ENCODE measurements at regions of chr3 and their contacts with region 1.

Region 1: DNA sequence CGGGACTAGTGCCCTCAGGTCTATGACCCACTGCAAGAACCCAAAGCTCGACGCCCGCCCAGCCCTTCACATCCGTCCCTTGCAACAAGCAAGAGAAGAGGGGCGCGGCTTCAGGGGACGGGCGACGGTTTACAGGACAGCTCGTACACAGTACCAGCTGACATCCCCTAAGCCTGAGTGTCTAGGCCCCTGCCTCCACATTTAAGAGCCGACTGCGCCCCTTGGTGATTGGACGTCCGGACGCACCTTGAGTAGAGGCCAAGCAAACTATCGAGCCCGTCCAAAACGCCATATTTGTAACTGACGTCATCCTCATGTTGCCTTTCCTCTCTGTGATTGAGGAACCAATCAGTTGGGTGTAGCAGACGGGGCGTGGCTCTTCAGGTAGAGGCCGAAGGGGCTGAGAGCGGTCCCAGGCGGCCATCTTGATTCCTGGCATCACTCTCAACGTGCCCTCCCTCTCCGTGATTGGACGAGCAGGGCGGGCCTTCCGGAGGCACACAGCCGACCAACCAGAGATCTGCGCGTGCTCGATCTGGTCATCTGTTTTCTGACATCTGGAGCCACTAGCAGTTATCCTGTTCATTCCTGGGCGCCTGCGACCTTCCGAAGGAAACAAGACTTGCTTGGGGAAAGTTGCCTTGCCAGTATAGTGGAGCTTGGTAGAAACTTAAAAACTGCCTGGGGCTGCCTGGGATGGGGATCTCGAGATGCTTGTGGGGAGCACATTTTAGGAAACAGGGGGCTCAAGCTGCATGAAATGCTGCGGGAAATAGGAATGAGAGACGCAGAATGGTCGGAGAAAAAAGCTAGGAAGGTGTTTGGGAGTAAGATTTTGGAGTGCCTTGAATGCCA is 4.0 kb upstream of the RPL14 start:
- DNase-seq: peak; percentile 98 to 99 (median 98)
- ATAC-seq: peak; percentile 96 to 98 (median 97)
- H3K4me3 ChIP-seq: peak overlapping the region; percentile 36 to 82 (median 72)
- H3K27ac ChIP-seq: peak overlapping the region; percentile 89 to 98 (median 93)
- H3K4me1 ChIP-seq: peaks cover 6 to 39% (median 21%) of the 10 kb centered on the region in 12 donors
- H3K27me3 ChIP-seq: no peaks in the 10 kb centered on the region
- CTCF ChIP-seq: peak in 1 of 12 donors; percentile 5
- POLR2A ChIP-seq: peak in 1 of 2 donors; percentile 73

Region 2: GRCh38 chr3:40207796-40208195 is 245.3 kb before region 1 on chr3:
- intact Hi-C with region 1: loop called in 1 of 10 experiments (anchors 10 kb)
- DNase-seq: no peak
- ATAC-seq: no peak
- H3K4me3 ChIP-seq: no peak overlapping the region
- H3K27ac ChIP-seq: no peak overlapping the region
- H3K4me1 ChIP-seq: no peaks in the 10 kb centered on the region
- H3K27me3 ChIP-seq: no peaks in the 10 kb centered on the region
- CTCF ChIP-seq: no peak
- POLR2A ChIP-seq: no peak

Region 3: DNA sequence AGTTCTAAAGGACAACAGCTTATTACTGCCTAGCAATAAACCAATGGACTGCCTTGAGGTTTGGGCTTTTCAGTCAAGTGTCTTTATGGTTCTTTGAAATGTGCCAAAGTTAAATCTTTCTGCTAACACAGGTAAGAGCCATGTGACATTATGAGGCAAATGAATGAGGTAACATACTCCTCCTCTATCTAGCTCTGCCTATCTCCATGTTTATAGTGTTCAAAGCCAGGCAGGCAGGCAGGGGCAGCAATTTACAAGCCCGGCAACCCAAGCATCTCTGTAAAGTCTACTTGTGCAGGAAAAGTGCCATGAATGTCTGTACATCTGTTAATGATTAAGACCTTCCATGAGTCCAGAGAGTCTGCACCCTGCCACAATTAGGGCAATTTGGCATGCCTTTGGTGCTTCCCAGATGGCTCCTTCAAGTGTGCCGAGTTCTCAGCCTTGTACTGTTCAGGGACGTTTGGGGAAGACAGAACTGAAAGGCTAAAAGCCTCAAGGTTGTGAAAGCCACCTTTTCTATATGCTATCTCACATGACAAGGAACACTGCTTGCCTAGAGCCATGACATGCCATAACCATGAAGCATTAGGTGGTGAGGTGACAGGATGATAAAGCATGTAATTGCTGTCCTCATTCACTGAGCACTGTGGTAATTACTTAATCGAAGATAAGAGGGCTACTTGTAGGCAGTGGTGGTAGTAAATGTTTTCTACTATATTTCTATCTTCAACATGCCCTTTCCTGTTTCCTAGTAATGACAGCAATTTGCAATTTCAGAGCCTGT is 185.0 kb before region 1 on chr3:
- intact Hi-C with region 1: no loop called
- DNase-seq: no peak
- ATAC-seq: peak in 3 of 4 donors; percentile 58 to 75 (median 72)
- H3K4me3 ChIP-seq: no peak overlapping the region
- H3K27ac ChIP-seq: no peak overlapping the region
- H3K4me1 ChIP-seq: peaks cover 0 to 15% (median 1%) of the 10 kb centered on the region in 12 donors
- H3K27me3 ChIP-seq: no peaks in the 10 kb centered on the region
- CTCF ChIP-seq: no peak
- POLR2A ChIP-seq: no peak

Region 4: DNA sequence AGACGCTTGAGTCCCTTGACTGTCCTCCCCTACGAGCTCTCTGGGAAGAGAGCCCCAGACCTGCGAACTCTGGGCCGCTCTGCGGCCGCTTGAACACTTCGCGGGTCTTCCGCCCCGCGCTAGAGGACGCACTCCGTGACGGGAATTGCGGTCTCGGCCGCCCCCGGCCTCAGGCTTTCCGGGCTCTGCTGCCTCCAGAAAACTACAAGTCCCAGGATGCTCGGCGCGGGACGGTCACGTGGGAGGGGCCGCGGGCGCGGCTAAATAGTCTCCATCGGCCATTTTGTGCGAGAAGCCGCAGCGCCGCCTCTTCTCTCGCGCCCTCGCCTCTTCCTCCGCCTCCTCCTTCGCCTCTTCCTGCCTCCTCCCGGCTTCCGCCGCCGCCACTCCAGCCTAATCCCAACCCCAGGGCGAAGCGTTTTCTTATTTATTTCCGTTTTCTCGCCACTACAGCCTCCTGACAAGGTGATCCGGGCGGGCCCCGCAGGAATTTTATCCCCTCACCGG is 143.6 kb before region 1 on chr3 and contains the start of gene EIF1B:
- intact Hi-C with region 1: loop called in 3 of 10 experiments (anchors 2 to 5 kb)
- DNase-seq: peak; percentile 98 to 99 (median 99)
- ATAC-seq: peak; percentile 91 to 96 (median 94)
- H3K4me3 ChIP-seq: peak within 1 kb of the TSS; percentile 71 to 96 (median 88)
- H3K27ac ChIP-seq: peak within 1 kb of the TSS; percentile 92 to 99 (median 97)
- H3K4me1 ChIP-seq: peaks cover 0 to 50% (median 32%) of the 10 kb centered on the region in 12 donors
- H3K27me3 ChIP-seq: no peaks in the 10 kb centered on the region
- CTCF ChIP-seq: peak; percentile 85 to 99 (median 94)
- POLR2A ChIP-seq: peak; percentile 48 to 99
- total RNA-seq, gene EIF1B: 64.0 to 357 (median 289) TPM

Region 5: DNA sequence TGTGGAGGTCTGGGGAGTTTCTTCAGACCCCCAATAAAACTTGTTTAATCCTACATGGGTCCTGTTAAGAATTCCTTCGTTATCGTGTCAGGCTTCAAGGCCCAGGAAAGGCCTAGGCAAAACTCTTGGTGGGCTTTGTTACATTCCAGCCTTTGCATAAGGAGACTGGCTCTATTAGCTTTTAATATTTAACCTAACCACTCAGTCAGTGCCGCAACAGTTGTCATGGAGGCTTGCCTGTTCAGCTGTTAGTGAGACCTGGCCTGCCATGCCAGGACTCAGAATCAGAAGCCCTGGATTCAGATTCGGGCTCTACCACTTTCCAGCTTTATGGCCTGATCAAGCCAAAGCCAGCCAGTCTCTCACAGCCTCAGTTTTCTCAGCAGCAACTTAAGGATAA is 124.0 kb before region 1 on chr3:
- intact Hi-C with region 1: loop called in 7 of 10 experiments (anchors 5 to 10 kb)
- DNase-seq: no peak
- ATAC-seq: no peak
- H3K4me3 ChIP-seq: no peak overlapping the region
- H3K27ac ChIP-seq: no peak overlapping the region
- H3K4me1 ChIP-seq: peaks cover 0 to 10% (median 4%) of the 10 kb centered on the region in 12 donors
- H3K27me3 ChIP-seq: no peaks in the 10 kb centered on the region
- CTCF ChIP-seq: no peak
- POLR2A ChIP-seq: no peak

Region 6: GRCh38 chr3:40337136-40338108 is 115.7 kb before region 1 on chr3:
- intact Hi-C with region 1: loop called in 2 of 10 experiments (anchors 5 to 10 kb)
- DNase-seq: no peak
- ATAC-seq: no peak
- H3K4me3 ChIP-seq: no peak overlapping the region
- H3K27ac ChIP-seq: no peak overlapping the region
- H3K4me1 ChIP-seq: peaks cover 0 to 10% (median 0%) of the 10 kb centered on the region in 12 donors
- H3K27me3 ChIP-seq: no peaks in the 10 kb centered on the region
- CTCF ChIP-seq: no peak
- POLR2A ChIP-seq: no peak

Region 7: GRCh38 chr3:40366203-40367162 is 86.6 kb before region 1 on chr3:
- intact Hi-C with region 1: no loop called
- DNase-seq: no peak
- ATAC-seq: peak in 1 of 4 donors; percentile 31
- H3K4me3 ChIP-seq: no peak overlapping the region
- H3K27ac ChIP-seq: no peak overlapping the region
- H3K4me1 ChIP-seq: peaks cover 0 to 8% (median 0%) of the 10 kb centered on the region in 12 donors
- H3K27me3 ChIP-seq: no peaks in the 10 kb centered on the region
- CTCF ChIP-seq: no peak
- POLR2A ChIP-seq: no peak

Region 8: GRCh38 chr3:40524568-40525285 is 71.6 kb after region 1 on chr3 and contains the start of gene ZNF621:
- intact Hi-C with region 1: loop called (anchors 2 to 10 kb)
- DNase-seq: peak; percentile 93 to 96 (median 94)
- ATAC-seq: peak; percentile 96 to 100 (median 100)
- H3K4me3 ChIP-seq: peak within 1 kb of the TSS; percentile 54 to 95 (median 84)
- H3K27ac ChIP-seq: peak within 1 kb of the TSS; percentile 70 to 94 (median 86)
- H3K4me1 ChIP-seq: peaks cover 0 to 19% (median 13%) of the 10 kb centered on the region in 12 donors
- H3K27me3 ChIP-seq: no peaks in the 10 kb centered on the region
- CTCF ChIP-seq: peak in 1 of 12 donors; percentile 15
- POLR2A ChIP-seq: peak in 1 of 2 donors; percentile 87
- total RNA-seq, gene ZNF621: 7.6 to 14.3 (median 9.7) TPM

Measured in heart left ventricle (tissue), 16 donors.